RWPE1 (cell line): ENCODE measurements at regions of chr19 and their contacts with region 1.

Region 1: DNA sequence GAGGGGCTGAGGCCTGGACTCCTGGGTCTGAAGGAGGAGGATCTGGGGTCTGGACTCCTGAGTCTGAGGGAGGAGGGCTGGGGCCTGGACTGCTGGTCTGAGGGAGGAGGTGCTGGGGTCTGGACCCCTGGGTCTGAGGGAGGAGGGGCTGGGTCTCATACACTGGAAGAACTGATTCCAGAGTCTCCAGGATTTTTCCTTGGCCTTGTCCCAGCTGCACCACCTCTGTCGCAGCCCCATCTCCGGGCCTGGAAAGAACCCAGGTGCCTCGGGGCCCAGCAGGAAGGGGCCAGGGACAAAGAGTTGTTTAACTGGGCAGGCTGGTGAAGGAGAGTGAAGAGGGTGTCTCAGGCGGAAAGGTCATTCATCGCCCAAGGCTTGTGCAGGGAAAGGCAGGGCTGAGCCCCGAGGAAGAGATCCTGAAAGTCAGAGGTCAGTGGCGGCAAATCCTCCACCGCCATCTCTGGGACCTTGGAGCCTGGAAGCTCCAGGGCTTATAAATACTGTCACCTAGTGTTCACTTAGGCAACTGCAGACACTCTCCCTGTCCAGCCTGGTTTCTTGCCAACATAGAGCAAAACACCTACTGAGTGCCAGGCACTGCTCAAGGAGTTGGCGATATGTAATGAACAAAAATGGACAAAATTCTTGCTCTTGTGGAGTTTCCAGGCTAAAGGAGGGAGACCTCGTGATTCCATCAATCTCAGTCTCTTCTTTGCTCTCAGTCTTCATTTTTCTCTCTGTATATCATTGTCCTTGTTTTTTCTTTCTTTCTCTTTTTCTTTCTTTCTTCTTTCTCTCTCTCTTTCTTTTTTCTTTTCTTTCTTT is 4.4 kb upstream of the KCNN4 start:
- DNase-seq: peak; percentile 70
- H3K27ac ChIP-seq: peak overlapping the region; percentile 96
- CTCF ChIP-seq: peak; percentile 99

Region 2: GRCh38 chr19:43687660-43687997 is 97.6 kb before region 1 on chr19:
- CTCF ChIA-PET with region 1: no interaction called
- POLR2A ChIA-PET with region 1: no interaction called
- DNase-seq: no peak
- H3K27ac ChIP-seq: peak overlapping the region; percentile 45; the same call in 1 of the 2 replicates
- CTCF ChIP-seq: no peak

Region 3: DNA sequence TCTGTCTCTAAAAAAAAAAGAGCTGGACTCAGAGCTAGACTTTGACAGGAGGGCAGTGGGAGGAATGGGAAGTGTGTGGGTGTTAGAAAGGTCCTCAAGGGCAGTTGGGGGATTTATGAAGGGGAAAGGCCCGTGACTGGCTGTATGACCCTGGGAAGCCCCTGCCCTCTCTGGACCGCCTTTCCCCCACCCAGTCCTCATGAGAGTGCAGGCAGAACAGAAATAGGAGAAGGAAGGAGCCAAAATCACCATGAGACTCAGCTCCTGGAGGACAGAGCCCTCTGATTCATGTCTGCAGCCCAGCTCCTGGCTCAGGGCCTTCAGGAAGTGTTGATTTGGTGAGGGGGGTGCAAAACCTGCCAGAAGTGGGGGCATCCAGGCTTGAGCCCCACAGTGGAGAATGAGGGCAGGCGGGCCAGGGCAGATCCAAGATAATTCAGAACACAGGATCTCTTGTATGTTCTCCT is 21.7 kb before region 1 on chr19:
- CTCF ChIA-PET with region 1: interaction called, 11 read pairs
- POLR2A ChIA-PET with region 1: no interaction called
- DNase-seq: no peak
- H3K27ac ChIP-seq: peak overlapping the region; percentile 95
- CTCF ChIP-seq: no peak